PC-9 (cell line): ENCODE measurements at regions of chr7 and their contacts with region 1.

Region 1: DNA sequence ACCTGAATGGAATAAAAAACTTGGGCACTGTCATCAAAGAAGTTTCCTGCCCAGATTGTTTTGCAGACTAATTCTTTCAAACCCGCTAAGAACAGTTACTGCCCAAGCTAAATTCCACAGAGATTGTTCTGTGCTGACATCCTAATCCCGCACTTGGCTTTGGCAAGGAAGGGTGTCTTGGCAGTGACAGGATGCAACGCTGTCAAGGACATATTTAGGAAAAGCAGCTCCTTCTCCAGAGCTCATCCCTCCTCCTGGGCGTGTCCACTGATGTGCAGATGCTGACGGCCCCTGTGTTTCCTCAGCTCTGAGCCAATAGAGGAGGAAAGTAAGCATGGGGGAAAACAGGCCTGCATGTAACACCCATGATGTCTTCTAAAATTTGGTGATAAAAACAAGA is 74.2 kb downstream of the EEPD1 start:
- DNase-seq: no peak
- H3K4me3 ChIP-seq: no peak overlapping the region
- H3K27ac ChIP-seq: no peak overlapping the region
- H3K4me1 ChIP-seq: peaks cover 2% of the 10 kb centered on the region
- H3K27me3 ChIP-seq: no peaks in the 10 kb centered on the region
- CTCF ChIP-seq: no peak

Region 2: GRCh38 chr7:36440880-36441279 is 213.7 kb after region 1 on chr7:
- CTCF ChIA-PET with region 1: interaction called, 11 read pairs
- POLR2A ChIA-PET with region 1: no interaction called
- intact Hi-C with region 1: no loop called
- DNase-seq: peak in 1 of 2 experiments; percentile 51
- H3K4me3 ChIP-seq: no peak overlapping the region
- H3K27ac ChIP-seq: no peak overlapping the region
- H3K4me1 ChIP-seq: no peaks in the 10 kb centered on the region
- H3K27me3 ChIP-seq: no peaks in the 10 kb centered on the region
- CTCF ChIP-seq: peak; percentile 74

Region 3: GRCh38 chr7:36563706-36564327 is 336.6 kb after region 1 on chr7:
- CTCF ChIA-PET with region 1: no interaction called
- POLR2A ChIA-PET with region 1: no interaction called
- intact Hi-C with region 1: no loop called
- DNase-seq: no peak
- H3K4me3 ChIP-seq: no peak overlapping the region
- H3K27ac ChIP-seq: no peak overlapping the region
- H3K4me1 ChIP-seq: no peaks in the 10 kb centered on the region
- H3K27me3 ChIP-seq: peaks cover 81% of the 10 kb centered on the region
- CTCF ChIP-seq: no peak